ENCODE measurements at regions of chr12 and their contacts with region 1.

Region 1: DNA sequence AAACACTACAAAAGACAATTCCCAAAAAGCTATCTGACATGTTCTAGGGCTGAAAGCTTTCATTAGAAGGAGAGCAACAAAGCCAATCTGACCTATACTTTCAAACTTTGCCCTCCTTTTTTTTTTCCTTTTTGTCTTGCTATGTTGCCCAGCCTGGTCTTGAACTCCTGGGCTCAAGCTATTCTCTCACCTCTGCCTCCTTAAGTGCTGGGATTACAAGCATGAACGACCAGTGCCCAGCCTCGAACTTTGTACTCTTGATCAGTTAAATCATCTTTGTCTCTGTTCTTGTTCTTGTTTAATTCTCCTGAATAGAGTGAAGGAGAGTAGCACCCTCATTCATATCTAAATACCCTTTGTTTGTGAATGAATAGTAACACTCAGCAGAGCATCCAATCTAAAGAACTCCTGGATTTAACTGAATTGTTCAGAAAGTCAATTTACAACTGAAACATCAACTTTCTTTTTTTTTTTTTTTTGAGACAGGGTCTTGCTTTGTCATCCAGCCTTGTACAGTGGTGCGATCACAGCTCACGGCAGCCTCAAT is 22.1 kb downstream of the ERP29 start:
- DNase-seq: no peak
- ATAC-seq: no peak
- H3K4me3 ChIP-seq: no peak overlapping the region
- H3K27ac ChIP-seq: no peak overlapping the region
- H3K4me1 ChIP-seq: no peaks in the 10 kb centered on the region
- H3K27me3 ChIP-seq: no peaks in the 10 kb centered on the region

Region 2: GRCh38 chr12:111887926-111888745 is 147.2 kb before region 1 on chr12:
- intact Hi-C with region 1: no loop called
- DNase-seq: peak in 1 of 3 donors; percentile 47
- ATAC-seq: peak in 1 of 2 donors; percentile 36
- H3K4me3 ChIP-seq: no peak overlapping the region
- H3K27ac ChIP-seq: no peak overlapping the region
- H3K4me1 ChIP-seq: no peaks in the 10 kb centered on the region
- H3K27me3 ChIP-seq: no peaks in the 10 kb centered on the region

Region 3: GRCh38 chr12:112066566-112066965 is 31.3 kb after region 1 on chr12:
- intact Hi-C with region 1: loop called in 1 of 4 experiments (anchors 5 kb)
- DNase-seq: no peak
- ATAC-seq: no peak
- H3K4me3 ChIP-seq: no peak overlapping the region
- H3K27ac ChIP-seq: no peak overlapping the region
- H3K4me1 ChIP-seq: no peaks in the 10 kb centered on the region
- H3K27me3 ChIP-seq: no peaks in the 10 kb centered on the region

Region 4: DNA sequence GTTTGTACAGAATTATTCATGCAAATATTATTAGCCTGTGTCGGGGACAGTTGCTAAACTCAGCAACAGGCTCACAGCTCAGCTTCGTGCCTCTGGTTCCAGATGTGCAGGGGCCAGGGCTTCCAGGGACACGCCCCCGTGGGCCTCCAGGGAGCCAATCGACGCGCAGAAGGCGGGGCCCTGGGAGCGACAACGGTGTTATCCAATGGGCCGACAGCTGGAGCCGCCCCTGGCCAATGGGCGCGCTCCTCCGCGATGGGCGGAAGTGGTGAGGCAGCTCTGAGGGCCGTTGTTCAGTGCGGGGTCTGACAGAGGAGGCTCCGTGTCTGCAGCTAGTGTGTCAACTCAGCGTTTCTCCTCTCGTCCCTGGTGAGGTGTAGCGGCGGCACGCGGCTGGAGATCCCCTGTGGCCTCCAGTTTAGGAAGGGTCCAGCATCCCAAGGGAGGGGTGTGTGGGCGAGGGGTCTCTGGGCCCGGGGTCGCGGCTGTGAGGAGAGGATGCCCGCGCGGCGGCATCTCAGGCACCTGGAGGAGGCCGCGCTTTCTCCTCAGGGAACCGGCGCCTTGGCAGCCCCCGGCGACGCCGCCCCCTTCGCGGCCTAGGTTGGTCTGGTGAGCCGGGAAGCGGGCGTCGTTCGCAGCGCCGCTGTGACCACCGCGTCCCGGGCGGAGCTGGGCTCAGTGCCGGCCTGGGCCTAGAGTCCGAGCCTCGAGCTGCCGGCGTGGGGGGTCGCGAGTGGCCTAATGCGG is 90.1 kb after region 1 on chr12 and contains the start of gene TRAFD1:
- intact Hi-C with region 1: no loop called
- DNase-seq: peak; percentile 98 to 100 (median 99)
- ATAC-seq: peak; percentile 98 to 99
- H3K4me3 ChIP-seq: peak within 1 kb of the TSS; percentile 61
- H3K27ac ChIP-seq: peak within 1 kb of the TSS; percentile 91
- H3K4me1 ChIP-seq: peaks cover 6% of the 10 kb centered on the region
- H3K27me3 ChIP-seq: no peaks in the 10 kb centered on the region
- total RNA-seq, gene TRAFD1: 21.9 to 24.5 (median 23.9) TPM